HEK293T (cell line): ENCODE measurements at regions of chr2 and their contacts with region 1.

Region 1: DNA sequence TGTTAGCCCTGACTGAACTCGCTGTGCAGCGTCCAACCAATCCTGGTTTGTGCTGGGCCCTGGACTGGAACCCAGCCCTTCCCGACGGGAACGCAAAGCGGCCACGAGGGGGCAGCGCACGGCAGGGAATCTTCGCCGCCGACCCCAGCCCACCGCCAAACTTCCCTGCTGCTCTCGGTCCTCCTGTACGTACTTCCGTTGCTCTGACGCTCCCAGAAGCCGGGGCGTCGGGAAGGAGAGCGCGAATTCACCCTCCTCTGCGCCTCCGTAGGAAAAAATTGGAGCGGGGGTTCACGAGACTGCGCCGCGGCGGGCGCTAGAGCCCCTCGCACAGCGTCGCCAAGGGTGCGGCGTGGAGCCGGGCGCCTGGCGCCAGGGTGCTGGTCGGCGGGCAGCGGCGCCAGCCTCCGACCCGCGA is 948 bp upstream of the SH3RF3 start:
- DNase-seq: peak; percentile 92

Region 2: GRCh38 chr2:108971661-108972566 is 156.1 kb before region 1 on chr2:
- CTCF ChIA-PET with region 1: no interaction called
- POLR2A ChIA-PET with region 1: no interaction called
- DNase-seq: no peak

Region 3: DNA sequence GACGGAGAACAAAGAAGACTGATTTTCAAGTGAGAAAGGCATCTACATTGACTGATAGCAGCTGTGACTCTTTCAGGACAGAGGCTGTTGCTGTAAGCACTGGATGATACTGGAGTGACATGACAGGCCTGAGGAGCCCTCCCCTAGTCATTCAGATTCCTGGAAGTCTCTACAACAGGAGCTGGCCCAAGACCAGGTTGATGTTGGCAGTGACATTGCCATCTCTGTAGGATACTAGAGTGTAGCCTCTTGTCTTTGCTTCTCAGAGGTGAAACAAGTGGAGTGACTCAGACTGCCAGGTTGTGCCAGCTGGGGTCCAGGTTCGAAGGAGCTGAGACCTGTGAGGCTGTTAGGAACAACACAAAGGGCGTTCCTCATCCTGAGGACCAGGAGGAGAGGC is 43.7 kb before region 1 on chr2:
- CTCF ChIA-PET with region 1: no interaction called
- POLR2A ChIA-PET with region 1: no interaction called
- DNase-seq: no peak

Region 4: DNA sequence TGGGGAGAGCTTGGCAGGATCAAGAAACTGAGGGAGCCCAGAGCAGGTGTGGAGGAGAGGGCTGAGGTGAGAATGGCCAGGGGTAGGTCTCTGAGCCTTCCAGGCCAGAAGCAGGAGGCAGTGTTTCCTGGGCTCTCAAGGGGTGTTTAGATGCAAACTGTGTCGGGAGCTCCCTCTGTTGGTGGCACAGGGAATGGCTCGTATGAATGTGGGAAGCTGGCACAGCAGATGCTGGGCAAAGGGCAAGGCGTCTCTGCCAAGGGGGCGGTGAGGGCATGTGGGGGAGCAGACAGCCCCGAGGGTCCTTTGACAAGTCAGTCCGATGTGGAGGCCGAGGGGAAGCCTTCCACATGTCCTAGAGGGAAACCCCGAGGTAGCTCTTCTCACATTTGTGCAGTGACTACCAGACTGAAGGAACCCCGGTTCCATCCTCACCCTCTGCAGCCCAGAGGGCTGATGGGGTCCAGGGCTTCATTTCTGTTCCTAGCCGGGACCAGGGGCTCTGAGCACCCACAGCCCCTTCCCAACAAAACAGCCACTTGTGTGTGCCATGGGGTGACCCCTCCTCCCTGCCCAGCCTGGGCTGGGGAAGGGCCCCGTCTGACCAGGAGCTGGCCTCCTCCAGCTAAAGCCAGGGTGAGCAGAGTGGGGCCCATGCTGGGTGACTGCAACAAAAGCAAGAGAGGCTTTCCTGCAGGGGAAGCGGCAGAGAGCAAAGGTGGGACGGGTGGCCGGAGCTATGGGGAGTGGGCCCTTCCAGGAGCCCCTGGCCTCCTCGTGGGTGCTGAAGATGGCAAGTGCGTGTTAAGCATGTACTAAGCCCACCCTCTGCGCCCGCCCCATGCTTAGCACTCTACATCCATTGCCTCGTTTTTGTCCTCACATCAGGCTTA is 382.3 kb after region 1 on chr2:
- CTCF ChIA-PET with region 1: interaction called, 11 read pairs
- POLR2A ChIA-PET with region 1: interaction called, 5 read pairs
- DNase-seq: peak; percentile 82